ENCODE measurements at regions of chr3 and their contacts with region 1.

Region 1: DNA sequence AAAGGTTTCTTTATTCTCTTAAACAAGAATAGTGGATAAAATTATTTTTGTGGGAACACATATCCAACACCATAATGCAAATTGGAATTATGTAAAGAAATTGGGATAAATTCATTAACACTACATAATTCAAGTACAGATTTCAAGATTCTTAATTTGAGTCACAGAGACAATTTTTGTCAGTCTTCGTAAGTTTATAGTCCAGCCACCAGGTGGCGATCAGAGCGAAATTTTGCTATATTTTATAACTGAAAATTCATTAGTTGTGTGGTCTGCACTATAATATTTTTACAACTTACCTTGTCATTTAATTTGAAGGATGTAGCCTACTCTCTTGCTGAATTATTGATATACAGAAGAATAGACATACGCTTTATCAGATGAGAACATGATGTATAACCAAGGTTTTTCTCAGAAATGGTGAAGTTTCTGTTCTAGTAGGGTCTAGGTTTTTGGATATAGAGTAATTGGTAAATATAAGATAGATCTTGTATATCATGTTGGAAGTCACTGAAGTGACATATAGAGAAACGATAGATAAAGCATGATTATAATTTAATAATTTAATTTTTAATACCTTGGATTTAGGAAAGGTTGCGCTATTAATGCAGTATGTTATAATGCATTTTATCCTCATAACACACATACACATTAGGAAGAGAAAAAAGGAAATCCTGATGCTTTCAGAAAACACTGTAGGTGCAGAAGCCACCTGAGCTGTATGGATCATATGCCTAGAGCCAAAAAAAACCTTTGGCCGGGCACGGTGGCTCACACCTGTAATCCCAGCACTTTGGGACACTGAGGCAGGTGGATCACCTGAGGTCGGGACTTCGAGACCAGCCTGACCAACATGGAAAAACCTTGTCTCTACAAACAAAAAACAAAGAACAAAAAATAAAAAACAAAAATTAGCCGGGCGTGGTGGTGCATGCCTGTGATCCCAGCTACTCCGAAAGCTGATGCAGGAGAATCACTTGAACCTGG is 31.7 kb downstream of the PLSCR4 start:
- DNase-seq: peak; percentile 30
- ATAC-seq: no peak

Region 2: GRCh38 chr3:145869958-145870357 is 349.2 kb before region 1 on chr3:
- intact Hi-C with region 1: no loop called
- DNase-seq: no peak
- ATAC-seq: no peak

Region 3: DNA sequence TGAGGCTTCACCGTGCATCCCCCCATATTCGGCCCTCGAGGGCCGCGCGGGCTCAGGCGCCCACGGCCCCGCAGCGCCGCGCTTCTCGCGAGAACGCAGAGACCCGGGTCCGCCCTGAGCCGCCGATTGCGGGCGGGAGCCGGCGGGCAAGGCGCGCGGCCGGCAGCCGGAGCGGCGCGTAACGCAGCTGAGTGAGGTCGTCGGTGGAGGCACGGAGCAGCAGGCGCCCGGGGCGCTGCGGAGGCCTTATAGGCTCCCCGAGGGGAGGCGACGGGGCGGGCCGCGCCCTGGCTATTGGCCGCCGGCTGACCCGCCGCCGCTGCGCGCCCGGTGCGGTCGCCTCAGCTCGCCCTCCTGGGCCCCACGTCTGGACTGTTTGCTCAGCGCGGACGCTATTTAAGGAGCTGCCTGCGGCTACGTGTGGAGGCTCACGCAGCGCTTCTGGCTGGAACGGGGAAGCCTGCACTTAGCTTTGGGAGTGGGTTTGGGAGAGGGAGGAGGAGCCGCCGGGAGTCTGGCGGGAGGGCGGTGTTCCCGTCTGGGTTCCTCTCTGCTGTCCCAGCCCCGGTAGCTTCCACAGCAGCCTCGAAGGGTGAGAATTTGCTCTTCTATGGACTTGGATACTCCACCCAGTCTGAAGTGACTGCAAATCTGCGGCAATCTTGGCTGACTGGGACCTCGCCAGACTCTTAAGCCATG is 58.1 kb before region 1 on chr3 and contains the start of gene PLOD2:
- intact Hi-C with region 1: no loop called
- DNase-seq: peak; percentile 84
- ATAC-seq: peak; percentile 83 to 84
- total RNA-seq, gene PLOD2: 35.7 to 39.0 TPM

Region 4: GRCh38 chr3:146326670-146327543 is 107.7 kb after region 1 on chr3:
- intact Hi-C with region 1: loop called (anchors 1 to 2 kb)
- DNase-seq: peak; percentile 36
- ATAC-seq: peak; percentile 83 to 92

Region 5: DNA sequence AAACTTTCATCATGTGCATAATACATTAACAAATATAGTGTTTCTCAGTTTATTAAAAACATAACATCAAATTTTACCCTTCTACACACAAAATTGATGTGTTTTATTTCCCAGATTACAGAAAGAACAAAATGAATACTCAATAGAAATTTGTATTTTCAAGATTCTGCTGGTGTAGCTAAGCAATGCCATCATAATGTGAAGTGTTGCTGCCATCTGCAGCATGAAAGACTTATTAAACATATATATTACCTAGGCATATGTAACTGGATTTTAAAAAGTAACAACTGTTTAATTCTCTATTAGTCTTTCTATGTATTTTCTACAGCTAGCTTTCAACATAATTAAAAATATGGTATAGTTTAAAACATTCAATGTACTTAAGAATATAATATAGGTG is 358.5 kb after region 1 on chr3:
- intact Hi-C with region 1: loop called (anchors 2 to 10 kb)
- DNase-seq: no peak
- ATAC-seq: peak in 1 of 2 donors; percentile 55

Measured in left cardiac atrium (tissue), 4 donors.